Left cardiac atrium (tissue), 4 donors: ENCODE measurements at regions of chr16 and their contacts with region 1.

Region 1: DNA sequence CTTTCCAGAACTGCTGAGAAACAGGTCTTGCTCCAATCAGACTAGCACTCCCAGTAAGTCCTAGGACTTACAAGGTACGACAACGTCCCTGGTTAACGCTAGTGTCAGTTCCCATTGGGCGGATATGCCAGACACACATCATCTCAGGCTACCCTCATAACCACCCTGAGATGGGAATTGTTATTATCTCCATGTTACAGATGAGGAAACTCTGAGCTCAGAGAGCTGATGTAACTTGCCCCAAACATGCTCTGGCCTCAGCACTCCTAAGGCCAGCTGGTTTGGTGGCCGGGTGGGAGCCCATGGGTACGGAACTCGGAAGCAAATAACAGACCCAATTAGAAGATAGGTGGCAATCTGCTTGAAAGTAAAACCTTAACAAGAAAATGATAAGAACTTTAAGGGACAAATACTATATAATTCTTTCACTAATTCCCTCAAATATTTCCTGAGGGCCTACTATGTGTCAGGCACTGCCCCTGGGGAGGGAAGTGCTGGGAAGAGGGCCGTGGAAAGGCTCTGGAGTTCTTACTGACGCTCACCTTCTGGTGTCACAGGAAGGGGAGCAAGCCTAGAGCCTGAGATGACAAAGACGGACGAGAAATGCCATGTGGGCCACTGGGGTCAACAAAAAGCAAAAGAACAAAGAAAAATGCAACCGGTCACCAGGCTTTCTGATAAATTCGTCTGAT is 6.9 kb downstream of the CREBBP start:
- DNase-seq: no peak
- ATAC-seq: peak in 1 of 2 donors; percentile 3

Region 2: GRCh38 chr16:3793161-3793576 is 80.5 kb before region 1 on chr16:
- intact Hi-C with region 1: loop called (anchors 5 to 10 kb)
- DNase-seq: peak; percentile 69
- ATAC-seq: peak; percentile 82 to 83